OCI-LY7 (cell line): ENCODE measurements at regions of chr2 and their contacts with region 1.

Region 1: DNA sequence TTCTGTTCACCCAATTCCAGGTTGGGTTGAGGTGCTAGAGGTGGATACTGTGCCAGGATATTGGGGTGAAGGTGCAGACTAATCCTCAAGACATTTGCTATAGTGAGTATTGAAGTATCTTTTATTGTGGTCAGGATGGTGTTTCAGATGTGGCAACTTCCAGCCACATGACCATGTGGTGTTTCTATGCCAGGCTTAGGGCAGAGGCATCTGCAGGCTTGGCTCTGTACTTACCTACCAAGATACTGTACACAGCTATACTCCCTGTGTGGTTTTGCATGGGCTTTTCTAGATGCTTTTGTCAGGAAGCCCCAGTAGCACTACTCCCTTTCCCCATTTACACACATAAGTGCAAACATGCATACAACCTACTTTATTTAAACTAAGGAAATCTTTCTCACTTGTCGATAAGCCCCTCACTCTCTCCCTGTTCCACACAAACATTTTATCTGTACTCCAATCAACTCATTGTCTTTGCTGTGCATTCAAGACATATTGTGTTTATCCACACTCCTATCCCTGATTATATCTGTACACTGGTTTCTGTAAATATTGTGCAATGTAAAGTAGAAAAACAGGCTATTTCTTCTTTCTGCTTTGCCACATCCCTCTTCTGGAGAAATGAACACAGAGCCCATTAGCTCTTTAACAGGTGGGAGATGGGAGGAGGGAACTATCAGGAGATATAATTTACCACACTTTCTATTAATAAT is 12.3 kb downstream of the ARL6IP6 start:
- DNase-seq: peak; percentile 9
- H3K4me3 ChIP-seq: no peak overlapping the region
- H3K27ac ChIP-seq: no peak overlapping the region
- H3K4me1 ChIP-seq: peaks cover 23% of the 10 kb centered on the region
- CTCF ChIP-seq: no peak

Region 2: GRCh38 chr2:152255921-152256320 is 474.8 kb before region 1 on chr2:
- CTCF ChIA-PET with region 1: no interaction called
- POLR2A ChIA-PET with region 1: no interaction called
- intact Hi-C with region 1: no loop called
- DNase-seq: no peak
- H3K4me3 ChIP-seq: no peak overlapping the region
- H3K27ac ChIP-seq: no peak overlapping the region
- H3K4me1 ChIP-seq: no peaks in the 10 kb centered on the region
- CTCF ChIP-seq: no peak

Region 3: GRCh38 chr2:152421521-152422370 is 309.0 kb before region 1 on chr2:
- CTCF ChIA-PET with region 1: no interaction called
- POLR2A ChIA-PET with region 1: no interaction called
- intact Hi-C with region 1: no loop called
- DNase-seq: no peak
- H3K4me3 ChIP-seq: no peak overlapping the region
- H3K27ac ChIP-seq: no peak overlapping the region
- H3K4me1 ChIP-seq: no peaks in the 10 kb centered on the region
- CTCF ChIP-seq: no peak

Region 4: GRCh38 chr2:152743002-152743401 is 12.3 kb after region 1 on chr2:
- CTCF ChIA-PET with region 1: interaction called, 5 read pairs
- POLR2A ChIA-PET with region 1: interaction called, 12 read pairs
- intact Hi-C with region 1: no loop called
- DNase-seq: peak; percentile 33
- H3K4me3 ChIP-seq: no peak overlapping the region
- H3K27ac ChIP-seq: no peak overlapping the region
- H3K4me1 ChIP-seq: no peaks in the 10 kb centered on the region
- CTCF ChIP-seq: peak; percentile 77

Region 5: GRCh38 chr2:152875701-152876695 is 145.3 kb after region 1 on chr2:
- CTCF ChIA-PET with region 1: no interaction called
- POLR2A ChIA-PET with region 1: no interaction called
- intact Hi-C with region 1: no loop called
- DNase-seq: no peak
- H3K4me3 ChIP-seq: no peak overlapping the region
- H3K27ac ChIP-seq: no peak overlapping the region
- H3K4me1 ChIP-seq: no peaks in the 10 kb centered on the region
- CTCF ChIP-seq: no peak